Naive thymus-derived CD4-positive, alpha-beta T cell (primary cell): ENCODE measurements at regions of chr7 and their contacts with region 1.

Region 1: DNA sequence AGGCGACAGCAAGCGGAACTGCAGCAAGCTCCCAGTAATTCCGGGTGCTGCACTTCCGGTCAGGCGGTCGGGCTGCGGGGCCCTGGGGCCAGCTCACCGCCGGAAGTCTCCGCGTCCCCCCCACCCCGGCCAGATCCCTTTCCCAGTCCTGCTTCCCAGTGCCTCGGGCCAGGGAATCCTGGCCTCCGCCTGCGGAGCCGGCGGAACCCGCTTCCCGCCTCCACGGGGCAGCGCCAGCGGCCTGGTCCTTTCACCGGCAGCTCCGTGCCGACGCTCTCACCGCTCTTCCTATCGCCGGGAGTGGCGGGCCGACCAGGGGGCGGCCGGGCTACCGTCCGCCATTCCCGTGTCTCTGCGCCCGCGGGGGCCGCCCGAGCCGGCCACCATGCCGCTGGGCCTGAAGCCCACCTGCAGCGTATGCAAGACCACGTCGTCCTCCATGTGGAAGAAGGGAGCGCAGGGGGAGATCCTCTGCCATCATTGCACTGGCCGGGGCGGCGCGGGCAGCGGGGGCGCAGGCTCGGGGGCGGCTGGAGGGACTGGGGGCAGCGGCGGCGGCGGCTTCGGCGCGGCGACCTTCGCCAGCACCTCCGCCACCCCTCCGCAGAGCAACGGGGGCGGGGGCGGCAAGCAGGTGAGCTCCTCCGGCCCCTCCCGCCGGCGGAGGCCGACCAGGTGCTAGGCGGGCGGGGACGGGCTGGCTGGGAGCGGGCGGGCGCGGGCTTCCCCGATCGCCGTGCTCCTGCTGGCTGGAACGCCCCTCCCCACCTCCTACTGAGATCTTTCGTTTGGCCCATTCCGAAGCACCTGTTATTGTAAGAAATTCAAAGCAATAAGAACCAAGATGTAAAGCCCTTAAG is at the start of gene GATAD1:
- DNase-seq: peak in 7 of 9 donors; percentile 64 to 87 (median 84)
- ATAC-seq: peak; percentile 89
- H3K4me3 ChIP-seq: peak within 1 kb of the TSS; percentile 63
- H3K4me3 Mint-ChIP-seq: peak within 1 kb of the TSS; percentile 81 to 97 (median 93)
- H3K27ac ChIP-seq: peak within 1 kb of the TSS; percentile 95
- H3K27ac Mint-ChIP-seq: peak within 1 kb of the TSS; percentile 95 to 99 (median 98)
- H3K4me1 ChIP-seq: peaks cover 9 to 14% of the 10 kb centered on the region in 2 donors
- H3K4me1 Mint-ChIP-seq: peaks cover 6 to 38% (median 17%) of the 10 kb centered on the region in 7 donors
- H3K27me3 ChIP-seq: no peaks in the 10 kb centered on the region
- H3K27me3 Mint-ChIP-seq: peaks cover 0 to 3% (median 0%) of the 10 kb centered on the region in 5 donors
- total RNA-seq, gene GATAD1: 16.4 to 34.7 (median 22.7) TPM

Region 2: GRCh38 chr7:90917539-90917938 is 1530.0 kb before region 1 on chr7:
- CTCF ChIA-PET with region 1: no interaction called
- POLR2A ChIA-PET with region 1: no interaction called
- intact Hi-C with region 1: no loop called
- DNase-seq: no peak
- ATAC-seq: no peak
- H3K4me3 ChIP-seq: no peak overlapping the region
- H3K4me3 Mint-ChIP-seq: no peak overlapping the region
- H3K27ac ChIP-seq: no peak overlapping the region
- H3K27ac Mint-ChIP-seq: no peak overlapping the region
- H3K4me1 ChIP-seq: no peaks in the 10 kb centered on the region
- H3K4me1 Mint-ChIP-seq: no peaks in the 10 kb centered on the region
- H3K27me3 ChIP-seq: no peaks in the 10 kb centered on the region
- H3K27me3 Mint-ChIP-seq: no peaks in the 10 kb centered on the region

Region 3: DNA sequence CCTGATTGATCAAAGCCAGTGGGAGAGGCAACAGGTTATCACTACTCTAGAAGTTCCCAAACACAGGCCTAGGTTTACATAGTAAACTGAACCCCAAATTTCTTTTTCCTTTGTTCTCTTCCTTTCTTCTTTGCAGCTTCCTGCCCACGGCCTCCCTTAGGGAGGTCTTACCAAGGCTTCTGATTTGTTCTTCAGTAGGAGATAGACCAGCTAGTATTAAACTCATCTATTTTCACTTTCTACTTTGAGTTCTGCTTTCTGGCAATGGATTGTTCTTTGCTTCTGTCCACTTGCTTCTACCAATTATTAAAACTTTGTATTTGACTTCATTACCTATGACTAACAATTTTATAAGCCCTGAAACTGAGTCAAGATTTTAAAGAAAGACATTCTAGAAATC is 1434.5 kb before region 1 on chr7:
- CTCF ChIA-PET with region 1: no interaction called
- POLR2A ChIA-PET with region 1: no interaction called
- intact Hi-C with region 1: no loop called
- DNase-seq: no peak
- ATAC-seq: no peak
- H3K4me3 ChIP-seq: no peak overlapping the region
- H3K4me3 Mint-ChIP-seq: no peak overlapping the region
- H3K27ac ChIP-seq: no peak overlapping the region
- H3K27ac Mint-ChIP-seq: no peak overlapping the region
- H3K4me1 ChIP-seq: no peaks in the 10 kb centered on the region
- H3K4me1 Mint-ChIP-seq: no peaks in the 10 kb centered on the region
- H3K27me3 ChIP-seq: no peaks in the 10 kb centered on the region
- H3K27me3 Mint-ChIP-seq: peaks cover 0 to 5% (median 2%) of the 10 kb centered on the region in 5 donors

Region 4: DNA sequence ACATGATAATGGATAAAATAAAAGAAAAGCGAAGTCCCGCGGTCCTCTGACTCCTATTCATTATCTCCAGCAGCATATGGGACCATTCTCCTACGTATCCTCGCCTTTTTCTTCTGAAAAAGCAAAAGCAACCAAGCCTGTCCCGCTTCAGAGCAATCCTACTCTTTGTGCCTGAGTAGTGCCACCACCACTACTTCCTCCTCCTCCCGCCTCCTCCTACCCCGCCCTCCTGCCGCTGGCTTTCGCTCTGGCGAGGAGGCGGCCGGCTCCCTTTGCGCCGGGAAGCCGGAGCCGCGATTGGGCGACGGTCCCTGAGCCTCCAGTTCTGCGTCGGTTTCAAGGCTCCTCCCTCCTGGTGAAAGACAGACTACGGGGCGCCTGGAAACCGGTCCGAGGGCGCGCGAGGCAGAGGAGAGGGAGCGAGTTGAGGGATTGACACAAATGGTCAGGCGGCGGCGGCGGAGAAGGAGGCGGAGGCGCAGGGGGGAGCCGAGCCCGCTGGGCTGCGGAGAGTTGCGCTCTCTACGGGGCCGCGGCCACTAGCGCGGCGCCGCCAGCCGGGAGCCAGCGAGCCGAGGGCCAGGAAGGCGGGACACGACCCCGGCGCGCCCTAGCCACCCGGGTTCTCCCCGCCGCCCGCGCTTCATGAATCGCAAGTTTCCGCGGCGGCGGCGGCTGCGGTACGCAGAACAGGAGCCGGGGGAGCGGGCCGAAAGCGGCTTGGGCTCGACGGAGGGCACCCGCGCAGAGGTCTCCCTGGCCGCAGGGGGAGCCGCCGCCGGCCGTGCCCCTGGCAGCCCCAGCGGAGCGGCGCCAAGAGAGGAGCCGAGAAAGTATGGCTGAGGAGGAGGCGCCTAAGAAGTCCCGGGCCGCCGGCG is 1183.3 kb before region 1 on chr7 and contains the start of gene FZD1:
- CTCF ChIA-PET with region 1: no interaction called
- POLR2A ChIA-PET with region 1: no interaction called
- intact Hi-C with region 1: loop called in 1 of 2 experiments (anchors 5 kb)
- DNase-seq: peak in 8 of 9 donors; percentile 7 to 77 (median 44)
- ATAC-seq: peak; percentile 89
- H3K4me3 ChIP-seq: peak within 1 kb of the TSS; percentile 47
- H3K4me3 Mint-ChIP-seq: peak within 1 kb of the TSS; percentile 87 to 96 (median 92)
- H3K27ac ChIP-seq: no peak within 1 kb of the TSS
- H3K27ac Mint-ChIP-seq: peak within 1 kb of the TSS in 3 of 9 donors; percentile 42 to 75 (median 63)
- H3K4me1 ChIP-seq: peaks cover 0 to 9% of the 10 kb centered on the region in 2 donors
- H3K4me1 Mint-ChIP-seq: peaks cover 0 to 26% (median 12%) of the 10 kb centered on the region in 7 donors
- H3K27me3 ChIP-seq: no peaks in the 10 kb centered on the region
- H3K27me3 Mint-ChIP-seq: peaks cover 16 to 60% (median 41%) of the 10 kb centered on the region in 5 donors
- total RNA-seq, gene FZD1: 0.24 to 3.4 (median 0.64) TPM

Region 5: GRCh38 chr7:91880413-91881241 is 566.9 kb before region 1 on chr7 and contains the start of gene MTERF1:
- CTCF ChIA-PET with region 1: interaction called, 4 read pairs
- POLR2A ChIA-PET with region 1: interaction called, 9 read pairs
- intact Hi-C with region 1: loop called (anchors 1 to 2 kb)
- DNase-seq: peak; percentile 85 to 93 (median 91)
- ATAC-seq: peak; percentile 100
- H3K4me3 ChIP-seq: peak within 1 kb of the TSS; percentile 84
- H3K4me3 Mint-ChIP-seq: peak within 1 kb of the TSS; percentile 88 to 100 (median 98)
- H3K27ac ChIP-seq: peak within 1 kb of the TSS; percentile 72
- H3K27ac Mint-ChIP-seq: peak within 1 kb of the TSS; percentile 89 to 98 (median 96)
- H3K4me1 ChIP-seq: peaks cover 0 to 8% of the 10 kb centered on the region in 2 donors
- H3K4me1 Mint-ChIP-seq: peaks cover 31 to 53% (median 39%) of the 10 kb centered on the region in 7 donors
- H3K27me3 ChIP-seq: no peaks in the 10 kb centered on the region
- H3K27me3 Mint-ChIP-seq: peaks cover 0 to 9% (median 0%) of the 10 kb centered on the region in 5 donors
- total RNA-seq, gene MTERF1: 9.6 to 32.7 (median 17.8) TPM

Region 6: DNA sequence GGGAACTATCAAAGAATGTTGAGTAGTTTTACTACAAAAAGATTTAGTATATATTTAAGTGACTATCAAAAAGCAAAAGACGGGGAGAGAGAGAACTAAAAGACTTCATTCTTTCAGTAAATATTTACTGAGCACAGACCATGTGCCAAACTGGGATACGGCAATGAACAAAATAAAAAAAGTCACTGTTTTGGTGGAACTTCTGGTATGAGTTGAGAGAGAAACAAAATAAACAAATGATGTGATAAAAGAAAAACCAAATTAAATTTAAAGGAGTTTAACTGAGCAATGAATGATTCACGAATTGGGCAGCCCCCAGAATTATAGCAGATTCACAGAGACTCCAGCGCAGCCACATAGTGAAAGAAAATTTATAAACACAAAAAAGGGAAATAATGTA is 524.7 kb before region 1 on chr7:
- CTCF ChIA-PET with region 1: no interaction called
- POLR2A ChIA-PET with region 1: no interaction called
- intact Hi-C with region 1: no loop called
- DNase-seq: no peak
- ATAC-seq: no peak
- H3K4me3 ChIP-seq: no peak overlapping the region
- H3K4me3 Mint-ChIP-seq: no peak overlapping the region
- H3K27ac ChIP-seq: no peak overlapping the region
- H3K27ac Mint-ChIP-seq: no peak overlapping the region
- H3K4me1 ChIP-seq: no peaks in the 10 kb centered on the region
- H3K4me1 Mint-ChIP-seq: peaks cover 0 to 2% (median 0%) of the 10 kb centered on the region in 7 donors
- H3K27me3 ChIP-seq: no peaks in the 10 kb centered on the region
- H3K27me3 Mint-ChIP-seq: peaks cover 21 to 37% (median 26%) of the 10 kb centered on the region in 5 donors

Region 7: GRCh38 chr7:92178927-92179924 is 268.3 kb before region 1 on chr7 and contains the start of gene LRRD1:
- CTCF ChIA-PET with region 1: no interaction called
- POLR2A ChIA-PET with region 1: interaction called, 3 read pairs
- intact Hi-C with region 1: loop called (anchors 1 kb)
- DNase-seq: peak; percentile 77 to 96 (median 89)
- ATAC-seq: peak; percentile 100
- H3K4me3 ChIP-seq: peak within 1 kb of the TSS; percentile 73
- H3K4me3 Mint-ChIP-seq: peak within 1 kb of the TSS; percentile 74 to 84 (median 80)
- H3K27ac ChIP-seq: peak within 1 kb of the TSS; percentile 37
- H3K27ac Mint-ChIP-seq: peak within 1 kb of the TSS in 5 of 9 donors; percentile 25 to 63 (median 41)
- H3K4me1 ChIP-seq: peaks cover 0 to 6% of the 10 kb centered on the region in 2 donors
- H3K4me1 Mint-ChIP-seq: peaks cover 0 to 17% (median 9%) of the 10 kb centered on the region in 7 donors
- H3K27me3 ChIP-seq: no peaks in the 10 kb centered on the region
- H3K27me3 Mint-ChIP-seq: peaks cover 0 to 33% (median 4%) of the 10 kb centered on the region in 5 donors
- total RNA-seq, gene LRRD1: 0.17 to 0.22 TPM in 2 of 5 experiments, not detected in the others

Region 8: GRCh38 chr7:92461027-92462003 is 13.7 kb after region 1 on chr7:
- CTCF ChIA-PET with region 1: interaction called, 5 read pairs
- POLR2A ChIA-PET with region 1: interaction called, 6 read pairs
- intact Hi-C with region 1: loop called (anchors 1 kb)
- DNase-seq: peak in 6 of 9 donors; percentile 3 to 38 (median 24)
- ATAC-seq: peak; percentile 72
- H3K4me3 ChIP-seq: no peak overlapping the region
- H3K4me3 Mint-ChIP-seq: no peak overlapping the region
- H3K27ac ChIP-seq: no peak overlapping the region
- H3K27ac Mint-ChIP-seq: peak overlapping the region in 3 of 9 donors; percentile 16 to 46 (median 45)
- H3K4me1 ChIP-seq: no peaks in the 10 kb centered on the region
- H3K4me1 Mint-ChIP-seq: peaks cover 0 to 2% (median 0%) of the 10 kb centered on the region in 7 donors
- H3K27me3 ChIP-seq: no peaks in the 10 kb centered on the region
- H3K27me3 Mint-ChIP-seq: no peaks in the 10 kb centered on the region

Region 9: DNA sequence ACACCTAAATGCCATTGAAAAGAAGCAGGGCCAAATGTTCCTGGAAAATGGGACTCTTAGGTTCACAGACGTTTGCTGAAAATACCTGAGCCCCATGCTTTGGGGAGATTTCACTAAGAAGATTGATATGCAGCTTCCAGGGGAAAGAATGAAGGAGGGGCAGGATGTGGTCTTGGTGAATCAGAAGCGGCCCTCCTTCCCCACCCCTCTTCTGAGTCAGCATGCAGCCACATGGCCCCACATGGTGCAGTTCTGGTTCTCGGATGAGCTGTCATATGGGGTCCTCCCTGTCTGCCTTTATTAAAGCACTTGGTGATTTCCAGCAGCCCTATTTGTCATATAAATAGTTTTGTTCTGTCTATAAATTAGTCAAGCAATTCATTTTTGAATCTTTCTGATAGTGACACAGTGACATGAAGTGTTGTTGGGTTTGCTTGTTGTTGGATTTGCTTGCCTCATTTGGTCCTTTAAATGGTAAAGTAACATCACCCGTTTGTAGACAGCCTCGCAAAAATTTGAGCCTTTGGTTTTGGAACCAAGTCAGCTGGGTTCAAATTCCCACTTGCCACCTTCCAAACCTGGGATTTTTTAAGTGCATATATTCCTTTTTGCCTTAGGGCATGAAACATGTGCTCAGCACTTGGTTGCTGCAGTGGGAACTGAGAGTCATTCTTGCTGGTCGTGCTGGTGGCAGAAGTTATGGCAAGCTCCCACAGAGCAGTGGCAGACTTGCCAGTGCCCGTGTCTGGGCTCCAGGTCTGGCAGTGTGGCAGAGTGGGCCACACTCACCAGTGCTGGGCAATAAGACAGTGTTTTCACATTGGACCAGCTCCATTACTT is 456.9 kb after region 1 on chr7:
- CTCF ChIA-PET with region 1: no interaction called
- POLR2A ChIA-PET with region 1: no interaction called
- intact Hi-C with region 1: loop called in 1 of 2 experiments (anchors 5 kb)
- DNase-seq: peak in 8 of 9 donors; percentile 21 to 80 (median 42)
- ATAC-seq: peak; percentile 99
- H3K4me3 ChIP-seq: no peak overlapping the region
- H3K4me3 Mint-ChIP-seq: peak overlapping the region in 1 of 10 donors; percentile 44
- H3K27ac ChIP-seq: no peak overlapping the region
- H3K27ac Mint-ChIP-seq: peak overlapping the region in 2 of 9 donors; percentile 39 to 83
- H3K4me1 ChIP-seq: peaks cover 0 to 7% of the 10 kb centered on the region in 2 donors
- H3K4me1 Mint-ChIP-seq: peaks cover 0 to 23% (median 12%) of the 10 kb centered on the region in 7 donors
- H3K27me3 ChIP-seq: no peaks in the 10 kb centered on the region
- H3K27me3 Mint-ChIP-seq: peaks cover 0 to 5% (median 0%) of the 10 kb centered on the region in 5 donors

Region 10: DNA sequence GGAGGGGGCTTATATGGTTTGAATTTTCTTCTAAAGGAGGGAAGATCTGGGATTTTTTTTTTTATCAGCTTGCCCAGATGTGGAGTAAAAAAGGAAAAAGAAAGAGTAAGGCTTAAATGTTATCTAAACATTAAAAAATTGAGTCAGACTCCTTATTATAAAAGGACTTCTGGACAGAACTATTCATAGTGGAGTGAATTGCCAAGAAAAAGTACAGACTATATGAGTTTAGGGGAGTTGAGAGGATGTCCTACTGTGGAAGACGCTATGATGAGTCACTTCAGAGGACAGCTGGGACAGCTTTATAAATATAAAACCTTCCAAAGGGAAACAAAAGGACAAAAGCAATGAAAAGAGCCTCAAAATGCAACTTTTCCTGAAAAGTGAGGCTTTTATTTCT is 1370.0 kb after region 1 on chr7:
- CTCF ChIA-PET with region 1: no interaction called
- POLR2A ChIA-PET with region 1: no interaction called
- intact Hi-C with region 1: no loop called
- DNase-seq: no peak
- ATAC-seq: no peak
- H3K4me3 ChIP-seq: no peak overlapping the region
- H3K4me3 Mint-ChIP-seq: no peak overlapping the region
- H3K27ac ChIP-seq: no peak overlapping the region
- H3K27ac Mint-ChIP-seq: no peak overlapping the region
- H3K4me1 ChIP-seq: no peaks in the 10 kb centered on the region
- H3K4me1 Mint-ChIP-seq: no peaks in the 10 kb centered on the region
- H3K27me3 ChIP-seq: no peaks in the 10 kb centered on the region
- H3K27me3 Mint-ChIP-seq: no peaks in the 10 kb centered on the region